Mammary epithelial cell (primary cell): ENCODE measurements at regions of chr3 and their contacts with region 1.

Region 1: DNA sequence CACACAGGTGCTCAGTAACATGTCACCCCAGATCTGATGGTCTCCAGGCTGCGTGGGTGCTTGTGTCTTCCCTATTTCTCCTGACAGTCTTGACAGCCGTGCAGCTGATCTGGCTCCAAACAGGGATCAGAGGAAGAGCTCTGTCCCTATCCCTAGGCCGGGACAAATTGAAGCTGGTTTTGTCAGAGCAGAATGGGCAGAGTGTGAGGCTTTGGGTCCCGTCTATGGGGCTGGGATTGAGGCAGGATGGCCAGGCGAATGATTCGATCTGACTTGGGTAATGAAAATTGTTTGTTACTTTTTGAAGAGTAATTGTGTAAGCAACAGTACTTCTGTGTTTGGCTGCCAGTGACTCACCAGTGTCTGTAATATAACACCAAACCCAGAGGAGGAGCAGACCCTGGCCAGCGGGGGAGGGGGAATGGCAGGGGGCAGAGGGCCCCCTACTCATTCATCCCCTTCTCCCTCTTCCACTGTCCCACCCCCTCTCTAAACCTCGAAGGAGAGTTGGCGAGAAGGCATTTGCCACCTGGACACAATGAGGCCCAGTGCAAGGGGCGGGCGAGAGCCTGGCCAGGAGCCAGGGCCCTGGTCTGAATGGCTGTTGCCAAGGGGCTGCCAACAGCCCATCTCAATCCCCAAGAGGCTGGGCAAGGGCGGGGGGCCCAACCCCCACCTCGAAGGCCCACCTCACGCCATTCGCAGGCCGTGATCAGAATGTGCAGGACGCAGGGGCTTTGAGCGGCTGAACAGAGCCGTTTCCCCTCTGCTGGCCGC is 4.9 kb upstream of the MAGEF1 start:
- DNase-seq: no peak
- H3K4me3 ChIP-seq: no peak overlapping the region
- H3K27ac ChIP-seq: no peak overlapping the region
- H3K4me1 ChIP-seq: peaks cover 10% of the 10 kb centered on the region
- H3K27me3 ChIP-seq: no peaks in the 10 kb centered on the region
- CTCF ChIP-seq: no peak

Region 2: DNA sequence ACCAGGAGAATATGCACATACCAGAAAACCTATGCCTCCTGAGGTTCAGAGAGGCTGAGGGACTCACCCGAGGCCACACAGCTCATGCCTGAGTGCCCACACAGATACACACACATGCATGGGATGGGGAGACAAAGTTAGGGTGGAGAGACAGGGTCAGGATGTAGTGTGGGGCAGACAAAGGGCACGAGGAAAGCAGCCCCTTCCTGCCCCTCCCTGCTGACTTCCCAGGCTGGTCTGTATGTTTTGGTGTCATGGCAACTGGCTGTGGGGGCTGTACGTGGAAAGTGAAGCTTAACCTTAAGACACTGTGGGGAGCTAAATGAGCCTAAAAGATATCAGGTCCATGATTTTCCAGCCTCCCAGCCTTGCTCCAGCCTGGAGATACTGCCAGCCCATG is 97.4 kb before region 1 on chr3:
- CTCF ChIA-PET with region 1: no interaction called
- dilution Hi-C with region 1: loop called (anchors 5 kb)
- in situ Hi-C with region 1: no loop called
- intact Hi-C with region 1: no loop called
- DNase-seq: no peak
- H3K4me3 ChIP-seq: no peak overlapping the region
- H3K27ac ChIP-seq: no peak overlapping the region
- H3K4me1 ChIP-seq: peaks cover 14% of the 10 kb centered on the region
- H3K27me3 ChIP-seq: no peaks in the 10 kb centered on the region
- CTCF ChIP-seq: no peak